ENCODE measurements at regions of chr2 and their contacts with region 1.

Region 1: DNA sequence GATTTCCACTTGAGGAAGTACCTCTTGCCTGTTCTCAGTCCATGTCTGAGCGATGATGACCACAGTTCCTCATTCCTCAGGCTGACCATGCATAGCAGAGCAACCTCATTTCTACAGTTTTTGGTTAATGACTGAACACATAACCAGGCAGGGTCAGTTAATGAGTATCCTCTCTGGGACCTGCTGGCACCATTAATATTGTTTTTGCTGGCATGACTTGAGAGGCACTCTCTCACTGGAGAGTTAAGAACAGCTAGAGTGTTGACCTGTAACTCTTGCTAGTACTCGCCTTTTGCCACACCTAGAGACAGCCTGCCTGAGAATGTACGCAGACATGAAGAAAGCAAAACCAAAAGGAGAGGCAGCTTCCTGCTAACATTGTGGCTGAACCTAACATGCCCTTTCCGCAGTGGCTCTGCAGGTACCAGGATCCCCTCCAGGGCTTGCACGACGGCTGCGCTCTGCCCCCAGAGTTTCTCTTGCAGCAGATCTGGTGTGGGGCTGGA is 23.9 kb downstream of the PECR start:
- DNase-seq: peak; percentile 44 to 54
- H3K4me3 ChIP-seq: no peak overlapping the region
- H3K27ac ChIP-seq: no peak overlapping the region
- H3K4me1 ChIP-seq: no peaks in the 10 kb centered on the region
- H3K27me3 ChIP-seq: no peaks in the 10 kb centered on the region
- CTCF ChIP-seq: no peak

Region 2: GRCh38 chr2:215811409-215812345 is 246.1 kb before region 1 on chr2:
- CTCF ChIA-PET with region 1: interaction called, 17 read pairs
- POLR2A ChIA-PET with region 1: no interaction called
- intact Hi-C with region 1: no loop called
- DNase-seq: no peak
- H3K4me3 ChIP-seq: no peak overlapping the region
- H3K27ac ChIP-seq: no peak overlapping the region
- H3K4me1 ChIP-seq: peaks cover 20% of the 10 kb centered on the region
- H3K27me3 ChIP-seq: no peaks in the 10 kb centered on the region
- CTCF ChIP-seq: no peak

Region 3: GRCh38 chr2:216086207-216086893 is 28.6 kb after region 1 on chr2:
- CTCF ChIA-PET with region 1: no interaction called
- POLR2A ChIA-PET with region 1: no interaction called
- intact Hi-C with region 1: no loop called
- DNase-seq: no peak
- H3K4me3 ChIP-seq: no peak overlapping the region
- H3K27ac ChIP-seq: no peak overlapping the region
- H3K4me1 ChIP-seq: peaks cover 6% of the 10 kb centered on the region
- H3K27me3 ChIP-seq: 0 out of 2 replicates have a peak, but pooled peaks cover 12% of the 10 kb centered on the region
- CTCF ChIP-seq: no peak

Region 4: DNA sequence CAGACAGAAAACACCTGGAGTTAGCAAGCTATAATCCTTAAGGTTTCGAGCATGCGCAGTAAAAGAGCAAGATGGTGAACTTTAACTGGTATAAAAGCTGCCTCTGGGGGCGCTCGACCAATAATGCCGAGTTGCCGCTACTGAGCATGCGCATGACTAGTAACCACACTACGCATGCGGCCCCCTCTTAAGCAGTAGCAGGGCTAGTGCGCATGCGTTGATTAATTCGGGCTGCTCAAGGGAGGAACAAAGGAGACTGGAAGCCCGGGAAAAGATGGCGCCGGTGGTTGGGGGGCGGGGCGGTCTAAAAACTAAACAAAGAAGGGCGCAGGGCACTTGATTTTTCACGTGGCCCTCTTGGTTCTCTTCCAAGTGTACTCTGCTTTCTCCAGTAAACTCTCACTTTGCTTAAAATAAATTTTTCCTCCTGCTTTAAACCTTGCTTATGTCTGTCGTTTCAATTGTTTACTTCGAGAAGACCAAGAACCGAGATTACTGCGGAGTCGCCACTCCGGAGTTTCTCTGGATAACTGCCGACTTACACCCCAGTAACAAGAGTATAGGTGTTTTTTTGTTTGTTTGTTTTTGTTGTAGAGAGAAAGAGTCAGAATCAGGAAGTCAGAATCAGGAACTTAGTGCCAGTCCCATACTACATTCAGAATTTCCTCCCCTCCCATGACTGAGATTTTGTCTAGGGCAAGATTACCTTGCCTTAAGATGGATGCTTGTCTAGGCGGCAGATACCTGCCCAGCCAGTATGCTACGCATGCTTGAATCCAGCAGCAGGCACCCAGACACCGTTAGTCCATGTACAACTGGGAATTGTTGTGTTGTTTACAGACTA is 57.2 kb after region 1 on chr2:
- CTCF ChIA-PET with region 1: no interaction called
- POLR2A ChIA-PET with region 1: no interaction called
- intact Hi-C with region 1: no loop called
- DNase-seq: peak; percentile 96 to 98
- H3K4me3 ChIP-seq: peak overlapping the region; percentile 76
- H3K27ac ChIP-seq: peak overlapping the region; percentile 81
- H3K4me1 ChIP-seq: peaks cover 19% of the 10 kb centered on the region
- H3K27me3 ChIP-seq: no peaks in the 10 kb centered on the region
- CTCF ChIP-seq: peak; percentile 99

Region 5: GRCh38 chr2:216905649-216906329 is 848.0 kb after region 1 on chr2:
- CTCF ChIA-PET with region 1: no interaction called
- POLR2A ChIA-PET with region 1: no interaction called
- intact Hi-C with region 1: no loop called
- DNase-seq: no peak
- H3K4me3 ChIP-seq: no peak overlapping the region
- H3K27ac ChIP-seq: no peak overlapping the region
- H3K4me1 ChIP-seq: no peaks in the 10 kb centered on the region
- H3K27me3 ChIP-seq: no peaks in the 10 kb centered on the region
- CTCF ChIP-seq: no peak

Measured in PC-9 (cell line).